ENCODE measurements at regions of chr3 and their contacts with region 1.

Region 1: GRCh38 chr3:52990637-52991036 is 55.2 kb downstream of the SFMBT1 start:
- DNase-seq: no peak
- ATAC-seq: no peak
- H3K4me3 ChIP-seq: no peak overlapping the region
- H3K4me3 Mint-ChIP-seq: no peak overlapping the region
- H3K27ac ChIP-seq: no peak overlapping the region
- H3K27ac Mint-ChIP-seq: peak overlapping the region in 1 of 2 donors; percentile 49
- H3K4me1 ChIP-seq: no peaks in the 10 kb centered on the region
- H3K4me1 Mint-ChIP-seq: peaks cover 47 to 68% (median 56%) of the 10 kb centered on the region in 3 donors
- H3K27me3 ChIP-seq: no peaks in the 10 kb centered on the region
- H3K27me3 Mint-ChIP-seq: no peaks in the 10 kb centered on the region

Region 2: DNA sequence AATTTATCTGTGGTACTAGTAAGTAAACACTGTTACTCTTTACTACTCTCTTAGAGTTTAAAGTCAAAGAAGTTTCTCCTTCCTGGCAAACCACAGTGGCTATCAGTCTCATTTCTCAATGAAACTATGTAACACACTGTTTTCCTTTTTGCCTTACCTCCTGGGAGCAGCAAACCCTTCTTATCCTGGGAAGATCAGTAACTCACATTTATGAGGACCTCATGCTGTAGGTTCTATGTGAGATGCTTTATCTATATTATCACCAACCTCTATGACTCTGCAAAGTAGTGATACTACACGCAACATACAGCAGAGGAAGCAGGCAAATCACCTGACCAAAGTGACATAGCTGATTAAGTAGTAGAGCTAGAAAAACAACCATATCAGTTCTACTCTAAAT is 340.2 kb before region 1 on chr3:
- CTCF ChIA-PET with region 1: no interaction called
- POLR2A ChIA-PET with region 1: interaction called in 1 of 2 experiments, 10 read pairs
- DNase-seq: no peak
- ATAC-seq: no peak
- H3K4me3 ChIP-seq: no peak overlapping the region
- H3K4me3 Mint-ChIP-seq: no peak overlapping the region
- H3K27ac ChIP-seq: no peak overlapping the region
- H3K27ac Mint-ChIP-seq: no peak overlapping the region
- H3K4me1 ChIP-seq: no peaks in the 10 kb centered on the region
- H3K4me1 Mint-ChIP-seq: peaks cover 0 to 6% (median 0%) of the 10 kb centered on the region in 3 donors
- H3K27me3 ChIP-seq: no peaks in the 10 kb centered on the region
- H3K27me3 Mint-ChIP-seq: no peaks in the 10 kb centered on the region

Region 3: GRCh38 chr3:52787672-52788625 is 202.7 kb before region 1 on chr3:
- CTCF ChIA-PET with region 1: no interaction called
- POLR2A ChIA-PET with region 1: no interaction called
- DNase-seq: no peak
- ATAC-seq: no peak
- H3K4me3 ChIP-seq: no peak overlapping the region
- H3K4me3 Mint-ChIP-seq: no peak overlapping the region
- H3K27ac ChIP-seq: no peak overlapping the region
- H3K27ac Mint-ChIP-seq: no peak overlapping the region
- H3K4me1 ChIP-seq: no peaks in the 10 kb centered on the region
- H3K4me1 Mint-ChIP-seq: no peaks in the 10 kb centered on the region
- H3K27me3 ChIP-seq: peaks cover 0 to 17% of the 10 kb centered on the region in 2 experiments
- H3K27me3 Mint-ChIP-seq: peaks cover 4% of the 10 kb centered on the region in 2 donors

Region 4: GRCh38 chr3:52845691-52846431 is 144.8 kb before region 1 on chr3:
- CTCF ChIA-PET with region 1: no interaction called
- POLR2A ChIA-PET with region 1: no interaction called
- DNase-seq: peak in 10 of 35 experiments; percentile 13 to 39 (median 18)
- ATAC-seq: peak in 3 of 4 experiments; percentile 32 to 46 (median 36)
- H3K4me3 ChIP-seq: no peak overlapping the region
- H3K4me3 Mint-ChIP-seq: no peak overlapping the region
- H3K27ac ChIP-seq: no peak overlapping the region
- H3K27ac Mint-ChIP-seq: no peak overlapping the region
- H3K4me1 ChIP-seq: no peaks in the 10 kb centered on the region
- H3K4me1 Mint-ChIP-seq: peaks cover 2 to 6% (median 5%) of the 10 kb centered on the region in 3 donors
- H3K27me3 ChIP-seq: no peaks in the 10 kb centered on the region
- H3K27me3 Mint-ChIP-seq: no peaks in the 10 kb centered on the region

Measured in T-cell (primary cell).